OCI-LY7 (cell line): ENCODE measurements at regions of chr6 and their contacts with region 1.

Region 1: DNA sequence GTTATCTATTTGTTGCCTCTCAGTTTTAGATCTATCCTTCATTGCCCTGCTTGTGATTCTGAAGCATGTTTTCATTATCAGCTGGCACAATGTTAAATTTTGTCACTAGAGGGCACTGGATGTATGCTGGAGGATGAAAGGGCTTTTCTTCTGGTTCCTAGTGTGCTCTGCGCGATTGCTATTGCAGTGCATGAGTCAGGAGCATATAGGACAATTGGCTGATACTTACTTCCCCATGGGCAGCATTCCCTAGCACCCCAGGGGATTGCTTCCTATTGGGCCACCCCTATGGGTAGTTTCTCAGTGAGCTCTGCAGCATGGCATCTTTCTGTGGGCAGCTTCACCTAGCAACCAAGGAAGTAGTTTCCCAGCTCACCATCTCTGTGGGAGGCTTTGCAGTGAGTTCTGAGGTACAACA is 280.3 kb upstream of the SYNCRIP start:
- DNase-seq: peak; percentile 44
- H3K4me3 ChIP-seq: no peak overlapping the region
- H3K27ac ChIP-seq: no peak overlapping the region
- H3K4me1 ChIP-seq: no peaks in the 10 kb centered on the region
- CTCF ChIP-seq: peak; percentile 86

Region 2: GRCh38 chr6:86192123-86192522 is 269.1 kb after region 1 on chr6:
- CTCF ChIA-PET with region 1: no interaction called
- POLR2A ChIA-PET with region 1: no interaction called
- intact Hi-C with region 1: loop called (anchors 2 kb)
- DNase-seq: peak; percentile 30
- H3K4me3 ChIP-seq: no peak overlapping the region
- H3K27ac ChIP-seq: no peak overlapping the region
- H3K4me1 ChIP-seq: no peaks in the 10 kb centered on the region
- CTCF ChIP-seq: peak; percentile 77

Region 3: GRCh38 chr6:86856937-86857563 is 934.0 kb after region 1 on chr6:
- CTCF ChIA-PET with region 1: no interaction called
- POLR2A ChIA-PET with region 1: no interaction called
- intact Hi-C with region 1: loop called (anchors 2 kb)
- DNase-seq: peak; percentile 58
- H3K4me3 ChIP-seq: no peak overlapping the region
- H3K27ac ChIP-seq: no peak overlapping the region
- H3K4me1 ChIP-seq: no peaks in the 10 kb centered on the region
- CTCF ChIP-seq: peak; percentile 94

Region 4: DNA sequence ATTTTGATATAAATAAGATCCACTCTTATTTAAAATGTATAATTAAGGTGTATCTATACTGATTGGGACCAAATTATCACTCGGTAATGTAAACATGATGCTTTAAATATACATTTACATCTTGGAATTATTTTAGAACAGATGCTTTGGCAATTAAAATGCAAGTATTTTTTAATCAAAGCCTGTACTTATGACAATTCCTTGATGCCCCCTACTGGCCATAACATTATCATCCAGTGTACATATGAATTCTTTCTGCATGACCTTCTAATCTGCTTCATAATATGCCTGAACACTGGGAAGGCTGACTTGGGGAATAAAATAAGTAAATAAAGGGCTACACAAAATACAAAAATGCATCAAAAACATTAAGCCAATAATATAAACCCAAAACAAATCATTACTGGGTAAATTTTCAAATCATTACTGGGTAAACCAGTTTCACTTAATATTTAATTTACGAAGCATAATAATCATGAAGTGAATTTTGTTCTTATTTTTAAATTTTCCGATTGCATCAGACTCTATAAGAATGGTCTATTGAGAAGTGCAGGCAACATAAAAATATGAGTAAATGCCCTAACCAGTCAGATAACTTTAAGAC is 1106.8 kb after region 1 on chr6:
- CTCF ChIA-PET with region 1: no interaction called
- POLR2A ChIA-PET with region 1: no interaction called
- intact Hi-C with region 1: loop called (anchors 10 kb)
- DNase-seq: peak; percentile 62
- H3K4me3 ChIP-seq: no peak overlapping the region
- H3K27ac ChIP-seq: no peak overlapping the region
- H3K4me1 ChIP-seq: no peaks in the 10 kb centered on the region
- CTCF ChIP-seq: peak; percentile 92